Activated CD4-positive, alpha-beta T cell treated with anti-CD3 and anti-CD28 coated beads for 36 hours (primary cell): ENCODE measurements at regions of chr12 and their contacts with region 1.

Region 1: DNA sequence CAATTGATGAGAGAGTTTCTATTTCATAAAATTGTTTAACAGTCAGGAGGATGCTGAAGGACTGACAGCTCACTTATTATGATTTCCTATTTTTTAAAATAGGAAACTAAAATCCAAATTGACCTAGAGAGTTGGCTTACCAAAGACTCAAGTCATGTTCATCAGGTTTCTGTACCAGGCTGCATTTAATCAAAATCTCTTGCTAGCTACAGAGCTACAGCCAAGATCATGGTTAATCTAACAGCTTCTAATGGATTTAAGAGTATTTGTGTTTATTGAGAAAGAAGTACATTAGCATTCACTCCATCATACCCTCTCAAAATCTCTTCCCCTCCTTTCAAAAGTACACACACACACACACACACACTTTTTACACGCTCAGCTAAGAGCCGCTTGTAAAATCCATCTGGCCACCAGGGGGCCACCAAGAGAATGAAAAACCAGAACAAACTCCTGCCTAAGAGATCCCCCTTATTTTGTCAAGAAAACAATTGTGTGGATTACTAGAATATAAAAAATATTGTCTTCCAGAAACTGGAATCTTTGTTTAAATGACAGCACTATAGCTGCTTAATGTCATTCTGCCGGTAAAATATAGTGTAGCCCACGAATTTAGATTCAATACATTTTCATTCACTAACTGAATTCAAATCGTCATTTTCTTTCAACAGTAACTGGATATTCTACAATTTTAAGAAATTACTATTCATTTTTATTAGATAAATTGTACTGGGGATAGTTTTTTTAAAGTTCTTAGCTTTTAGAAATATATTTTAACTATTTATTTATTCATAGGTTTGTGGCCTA is 334.0 kb downstream of the BTG1 start:
- DNase-seq: peak; percentile 82
- ATAC-seq: peak; percentile 68
- H3K4me3 Mint-ChIP-seq: no peak overlapping the region
- H3K27ac Mint-ChIP-seq: peak overlapping the region; percentile 8
- H3K4me1 Mint-ChIP-seq: peaks cover 17% of the 10 kb centered on the region
- H3K27me3 Mint-ChIP-seq: no peaks in the 10 kb centered on the region

Region 2: GRCh38 chr12:91778938-91779400 is 32.7 kb before region 1 on chr12:
- CTCF ChIA-PET with region 1: interaction called, 14 read pairs
- POLR2A ChIA-PET with region 1: no interaction called
- intact Hi-C with region 1: no loop called
- DNase-seq: peak; percentile 63
- ATAC-seq: peak; percentile 91
- H3K4me3 Mint-ChIP-seq: peak overlapping the region; percentile 46
- H3K27ac Mint-ChIP-seq: peak overlapping the region; percentile 81
- H3K4me1 Mint-ChIP-seq: peaks cover 42% of the 10 kb centered on the region
- H3K27me3 Mint-ChIP-seq: no peaks in the 10 kb centered on the region

Region 3: DNA sequence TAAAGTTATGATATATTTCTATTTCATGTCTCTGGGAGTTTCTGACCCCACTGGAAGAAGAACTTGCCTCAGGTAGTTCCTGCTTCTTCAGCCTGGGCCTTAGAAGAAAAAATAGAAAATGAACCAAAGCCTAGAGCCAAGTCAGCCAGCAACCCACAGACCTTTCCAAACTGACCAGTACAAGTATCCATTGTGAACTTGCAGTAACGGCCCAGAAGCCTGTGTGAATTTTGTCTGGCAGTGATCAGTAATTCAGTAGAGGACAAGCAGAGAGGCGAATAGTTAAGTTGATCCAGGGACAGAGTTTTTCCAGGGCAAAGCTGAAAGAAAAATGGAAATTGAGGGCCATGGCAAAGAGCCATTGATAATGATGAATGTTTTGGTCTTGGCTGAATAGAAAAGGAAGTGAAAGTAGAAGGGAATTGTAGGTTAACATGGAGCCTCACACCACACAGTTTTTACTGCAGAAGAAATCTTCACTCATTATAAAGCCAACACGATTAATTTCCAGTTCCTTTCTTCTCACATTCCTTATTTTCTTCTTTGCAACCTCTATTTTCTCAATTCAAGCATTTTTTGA is 22.2 kb after region 1 on chr12:
- CTCF ChIA-PET with region 1: interaction called, 24 read pairs
- POLR2A ChIA-PET with region 1: no interaction called
- intact Hi-C with region 1: no loop called
- DNase-seq: no peak
- ATAC-seq: no peak
- H3K4me3 Mint-ChIP-seq: no peak overlapping the region
- H3K27ac Mint-ChIP-seq: no peak overlapping the region
- H3K4me1 Mint-ChIP-seq: peaks cover 10% of the 10 kb centered on the region
- H3K27me3 Mint-ChIP-seq: no peaks in the 10 kb centered on the region

Region 4: GRCh38 chr12:91978143-91978542 is 166.5 kb after region 1 on chr12:
- CTCF ChIA-PET with region 1: no interaction called
- POLR2A ChIA-PET with region 1: no interaction called
- intact Hi-C with region 1: loop called in 1 of 2 experiments (anchors 5 kb)
- DNase-seq: peak; percentile 11
- ATAC-seq: peak; percentile 78
- H3K4me3 Mint-ChIP-seq: no peak overlapping the region
- H3K27ac Mint-ChIP-seq: peak overlapping the region; percentile 64
- H3K4me1 Mint-ChIP-seq: peaks cover 34% of the 10 kb centered on the region
- H3K27me3 Mint-ChIP-seq: no peaks in the 10 kb centered on the region

Region 5: DNA sequence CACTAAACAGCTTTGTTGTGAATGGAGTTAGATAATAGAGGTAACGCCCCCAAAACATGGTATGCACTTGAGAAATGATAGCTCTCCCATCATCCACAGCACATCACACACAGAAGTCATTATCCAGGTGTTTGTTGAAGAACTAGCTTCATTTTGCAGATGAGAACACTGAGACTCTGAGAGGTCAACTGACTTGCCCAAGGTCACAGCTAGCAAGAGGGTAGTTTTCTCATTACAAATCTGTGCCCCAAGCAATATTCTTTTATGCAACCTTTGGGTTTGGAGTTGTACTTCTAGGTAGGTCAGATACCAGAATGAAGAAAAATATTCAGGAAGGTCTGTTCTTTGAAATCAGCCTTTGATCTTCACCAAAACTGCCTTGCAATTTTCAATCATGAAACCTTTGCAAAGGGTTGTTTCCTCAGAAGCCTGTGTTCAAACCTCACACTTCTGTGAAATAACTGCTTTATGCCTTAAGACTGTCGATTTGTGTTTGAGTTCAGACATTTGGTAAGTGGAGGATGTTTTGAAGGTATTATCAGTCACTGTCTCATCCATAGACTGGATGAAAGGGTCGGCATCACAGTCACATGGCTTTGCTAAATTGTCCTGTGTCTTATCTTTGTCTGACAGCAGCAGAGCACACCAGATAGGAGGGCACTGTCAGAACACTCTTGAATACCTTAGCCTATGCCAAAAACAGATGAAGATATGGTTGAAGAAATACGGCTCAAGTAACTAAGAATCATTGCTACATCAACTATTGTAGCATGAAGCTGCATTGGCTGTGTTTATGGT is 567.2 kb after region 1 on chr12:
- CTCF ChIA-PET with region 1: no interaction called
- POLR2A ChIA-PET with region 1: no interaction called
- intact Hi-C with region 1: no loop called
- DNase-seq: no peak
- ATAC-seq: peak; percentile 74
- H3K4me3 Mint-ChIP-seq: no peak overlapping the region
- H3K27ac Mint-ChIP-seq: peak overlapping the region; percentile 35
- H3K4me1 Mint-ChIP-seq: peaks cover 43% of the 10 kb centered on the region
- H3K27me3 Mint-ChIP-seq: no peaks in the 10 kb centered on the region

Region 6: GRCh38 chr12:92649511-92650227 is 838.0 kb after region 1 on chr12:
- CTCF ChIA-PET with region 1: interaction called, 6 read pairs
- POLR2A ChIA-PET with region 1: no interaction called
- intact Hi-C with region 1: loop called in 1 of 2 experiments (anchors 5 kb)
- DNase-seq: peak; percentile 71
- ATAC-seq: peak; percentile 90
- H3K4me3 Mint-ChIP-seq: no peak overlapping the region
- H3K27ac Mint-ChIP-seq: no peak overlapping the region
- H3K4me1 Mint-ChIP-seq: peaks cover 10% of the 10 kb centered on the region
- H3K27me3 Mint-ChIP-seq: no peaks in the 10 kb centered on the region